ENCODE measurements at regions of chr2 and their contacts with region 1.

Region 1: DNA sequence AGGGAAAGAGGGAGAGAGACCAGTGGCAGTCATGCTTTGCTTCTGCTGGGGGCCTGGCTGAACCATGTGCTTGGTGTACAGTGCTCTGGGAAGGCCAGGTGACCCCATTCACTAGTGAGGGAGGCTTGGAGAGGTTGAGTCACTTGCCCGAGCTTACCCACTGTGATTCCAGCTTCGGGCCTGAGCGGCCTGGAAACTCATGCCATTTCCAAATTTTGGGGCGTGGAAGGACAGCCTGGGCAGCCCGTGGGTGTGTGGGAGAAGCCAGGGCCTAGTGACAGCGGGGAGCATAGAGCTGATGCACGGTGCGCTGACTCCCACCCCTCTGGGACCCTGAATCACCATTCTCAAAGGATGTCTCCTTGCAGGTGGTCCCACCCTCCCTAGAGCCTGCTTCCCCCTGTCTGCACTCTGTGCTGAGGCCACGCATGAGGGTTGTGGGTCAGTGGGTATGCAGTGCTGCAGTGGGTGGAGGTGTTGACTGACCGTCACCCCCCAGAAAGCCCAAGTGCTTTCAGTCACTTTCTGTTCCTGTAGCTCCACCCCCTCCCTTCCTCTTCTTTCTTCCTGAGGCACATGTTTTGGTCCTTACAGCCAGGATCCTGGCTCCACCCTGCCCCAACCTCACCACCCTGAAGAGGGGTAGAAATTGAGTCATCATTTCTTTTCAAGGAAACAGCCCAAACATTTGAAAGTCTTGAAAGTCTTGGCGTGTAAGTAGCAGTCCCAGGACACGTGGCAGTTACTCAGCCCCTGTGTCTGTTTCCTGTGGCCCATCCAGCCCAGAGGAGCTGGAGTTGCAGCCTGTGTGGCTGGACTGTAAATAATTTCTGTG is 69.3 kb upstream of the MCFD2 start:
- ATAC-seq: peak in 3 of 8 experiments; percentile 3 to 44 (median 38)
- H3K4me3 ChIP-seq: no peak overlapping the region
- H3K27ac ChIP-seq: no peak overlapping the region
- H3K4me1 ChIP-seq: peaks cover 26 to 34% of the 10 kb centered on the region in 2 donors

Region 2: GRCh38 chr2:46841621-46842020 is 143.2 kb before region 1 on chr2:
- in situ Hi-C with region 1: no loop called
- ATAC-seq: no peak
- H3K4me3 ChIP-seq: no peak overlapping the region
- H3K27ac ChIP-seq: no peak overlapping the region
- H3K4me1 ChIP-seq: peaks cover 0 to 9% of the 10 kb centered on the region in 2 donors

Region 3: DNA sequence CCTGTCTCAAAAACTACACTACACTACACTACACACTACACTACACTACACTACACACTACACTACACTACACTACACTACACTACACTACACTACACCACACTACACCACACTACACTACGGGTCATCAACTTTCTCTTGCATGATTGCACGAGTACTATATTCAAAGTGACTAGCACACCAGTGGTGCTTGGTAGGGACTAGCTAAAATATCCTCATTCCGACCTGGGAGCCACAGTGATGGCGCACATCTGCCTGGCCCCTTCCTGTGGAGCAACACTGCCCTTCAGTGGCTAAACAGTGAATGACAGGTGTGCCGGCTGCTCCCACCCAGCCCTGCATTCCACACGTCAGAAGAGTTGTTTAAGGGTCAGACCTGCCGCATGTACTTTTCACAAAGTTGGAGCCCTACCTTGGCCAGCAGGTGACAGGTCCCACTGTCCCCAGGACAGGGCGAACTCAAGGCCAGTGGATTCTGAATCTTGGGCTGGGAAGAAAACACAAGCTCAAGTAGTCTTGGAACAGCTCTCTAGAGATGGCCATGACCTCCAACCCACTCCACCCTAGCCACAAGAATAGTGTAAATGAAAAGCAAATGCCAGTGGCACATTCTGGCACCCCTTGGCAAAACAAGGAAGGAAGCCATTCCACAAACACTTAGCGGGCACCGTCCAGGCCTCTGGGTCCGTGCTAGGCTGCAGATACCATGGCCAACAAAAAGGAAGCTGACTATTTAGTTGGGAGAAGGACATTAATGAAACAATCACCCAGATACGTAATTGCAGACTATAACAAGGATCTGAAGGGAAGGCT is 338.4 kb after region 1 on chr2:
- in situ Hi-C with region 1: loop called in 3 of 9 experiments (anchors 5 to 10 kb)
- ATAC-seq: peak; percentile 77 to 97 (median 83)
- H3K4me3 ChIP-seq: no peak overlapping the region
- H3K27ac ChIP-seq: no peak overlapping the region
- H3K4me1 ChIP-seq: peaks cover 3 to 7% of the 10 kb centered on the region in 2 donors